ENCODE measurements at regions of chr4 and their contacts with region 1.

Region 1: GRCh38 chr4:48944756-48945241 is 38.2 kb upstream of the OCIAD2 start:
- DNase-seq: peak; percentile 73
- ATAC-seq: peak; percentile 75
- H3K4me3 Mint-ChIP-seq: no peak overlapping the region
- H3K27ac Mint-ChIP-seq: no peak overlapping the region
- H3K4me1 Mint-ChIP-seq: peaks cover 13% of the 10 kb centered on the region
- H3K27me3 Mint-ChIP-seq: no peaks in the 10 kb centered on the region
- CTCF ChIP-seq: no peak

Region 2: GRCh38 chr4:48931459-48931858 is 13.3 kb before region 1 on chr4:
- CTCF ChIA-PET with region 1: interaction called, 12 read pairs
- POLR2A ChIA-PET with region 1: no interaction called
- intact Hi-C with region 1: no loop called
- DNase-seq: no peak
- ATAC-seq: no peak
- H3K4me3 Mint-ChIP-seq: no peak overlapping the region
- H3K27ac Mint-ChIP-seq: no peak overlapping the region
- H3K4me1 Mint-ChIP-seq: no peaks in the 10 kb centered on the region
- H3K27me3 Mint-ChIP-seq: no peaks in the 10 kb centered on the region
- CTCF ChIP-seq: no peak

Region 3: DNA sequence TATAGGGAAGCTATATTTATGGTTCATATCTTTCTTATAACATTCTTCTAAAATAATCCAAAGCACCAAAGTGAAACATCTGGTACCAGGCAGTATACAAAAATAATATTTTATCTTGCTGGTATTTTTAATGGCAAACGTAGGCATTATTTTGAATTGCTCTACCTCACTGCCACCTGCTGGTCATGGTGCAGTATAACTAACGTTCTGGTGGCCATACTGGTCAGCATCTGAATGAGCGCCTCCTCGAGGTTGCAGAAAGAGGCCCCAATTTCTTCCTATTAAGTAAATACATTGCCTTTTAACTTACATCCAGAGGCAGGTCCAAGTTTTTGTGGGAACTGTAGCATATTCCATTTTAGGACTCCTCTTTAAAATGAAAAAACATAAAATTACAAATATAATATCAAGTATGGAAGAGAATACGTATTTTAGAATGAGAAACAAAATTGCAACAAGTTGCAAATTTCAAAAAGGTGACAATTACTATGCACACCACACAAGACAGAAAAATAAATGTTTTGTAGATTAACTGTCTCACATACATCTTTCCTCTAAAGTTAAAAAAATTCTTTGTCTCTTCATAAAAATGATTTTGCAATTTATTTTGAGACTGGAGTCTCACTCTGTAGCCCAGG is 18.4 kb after region 1 on chr4:
- CTCF ChIA-PET with region 1: interaction called, 22 read pairs
- POLR2A ChIA-PET with region 1: no interaction called
- intact Hi-C with region 1: no loop called
- DNase-seq: peak; percentile 80
- ATAC-seq: peak; percentile 95
- H3K4me3 Mint-ChIP-seq: no peak overlapping the region
- H3K27ac Mint-ChIP-seq: no peak overlapping the region
- H3K4me1 Mint-ChIP-seq: no peaks in the 10 kb centered on the region
- H3K27me3 Mint-ChIP-seq: no peaks in the 10 kb centered on the region
- CTCF ChIP-seq: peak; percentile 98

Region 4: DNA sequence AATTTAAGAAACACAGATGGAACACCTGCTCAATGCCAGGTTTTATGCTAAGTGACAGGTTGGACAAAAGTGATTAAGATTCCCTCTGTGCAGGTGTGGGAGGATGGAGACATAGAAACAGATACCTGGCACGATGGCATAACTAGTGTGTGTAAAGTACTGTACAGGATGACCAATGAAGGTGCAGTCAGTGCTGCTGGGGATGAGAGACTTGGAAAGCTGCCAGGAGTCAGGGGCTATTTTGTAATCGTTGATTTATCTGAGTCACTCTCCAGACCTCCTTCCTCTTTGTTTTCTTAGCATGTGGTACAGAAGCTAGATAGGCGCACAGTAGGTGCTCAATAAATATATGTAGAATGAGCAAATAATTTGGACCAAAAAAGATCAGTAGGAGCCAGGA is 99.5 kb after region 1 on chr4:
- CTCF ChIA-PET with region 1: no interaction called
- POLR2A ChIA-PET with region 1: no interaction called
- intact Hi-C with region 1: no loop called
- DNase-seq: no peak
- ATAC-seq: no peak
- H3K4me3 Mint-ChIP-seq: no peak overlapping the region
- H3K27ac Mint-ChIP-seq: no peak overlapping the region
- H3K4me1 Mint-ChIP-seq: no peaks in the 10 kb centered on the region
- H3K27me3 Mint-ChIP-seq: peaks cover 4% of the 10 kb centered on the region
- CTCF ChIP-seq: no peak

Measured in activated CD8-positive, alpha-beta T cell treated with anti-CD3 and anti-CD28 coated beads for 36 hours (primary cell).